Dendritic cell treated with granulocyte-macrophage colony-stimulating factor and Interleukin-4, amounts not matched to agents 40 ng/mL and 50 ng/mL, for 4 days (primary cell): ENCODE measurements at regions of chr5 and their contacts with region 1.

Region 1: DNA sequence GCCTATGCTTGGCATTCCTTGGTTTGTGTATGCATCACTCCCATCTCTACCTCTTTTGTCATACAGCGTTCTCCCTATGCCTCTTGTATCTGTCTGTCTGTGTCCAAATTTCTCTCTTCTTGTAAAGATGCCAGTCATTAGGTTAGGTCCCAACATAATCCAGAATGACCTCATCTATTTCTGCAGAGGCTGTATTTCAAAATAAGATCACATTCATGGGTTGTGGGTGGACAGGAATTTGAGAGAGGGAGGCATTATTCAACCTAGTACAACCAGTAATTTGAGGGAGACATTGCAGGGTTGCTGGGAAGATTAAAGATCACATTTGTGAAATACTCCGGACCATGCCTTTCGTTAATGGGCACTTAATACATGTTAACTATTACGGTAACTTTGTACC is 155.0 kb downstream of the MAN2A1 start:
- H3K4me3 Mint-ChIP-seq: no peak overlapping the region
- H3K27ac Mint-ChIP-seq: no peak overlapping the region
- H3K4me1 Mint-ChIP-seq: no peaks in the 10 kb centered on the region
- H3K27me3 Mint-ChIP-seq: no peaks in the 10 kb centered on the region

Region 2: DNA sequence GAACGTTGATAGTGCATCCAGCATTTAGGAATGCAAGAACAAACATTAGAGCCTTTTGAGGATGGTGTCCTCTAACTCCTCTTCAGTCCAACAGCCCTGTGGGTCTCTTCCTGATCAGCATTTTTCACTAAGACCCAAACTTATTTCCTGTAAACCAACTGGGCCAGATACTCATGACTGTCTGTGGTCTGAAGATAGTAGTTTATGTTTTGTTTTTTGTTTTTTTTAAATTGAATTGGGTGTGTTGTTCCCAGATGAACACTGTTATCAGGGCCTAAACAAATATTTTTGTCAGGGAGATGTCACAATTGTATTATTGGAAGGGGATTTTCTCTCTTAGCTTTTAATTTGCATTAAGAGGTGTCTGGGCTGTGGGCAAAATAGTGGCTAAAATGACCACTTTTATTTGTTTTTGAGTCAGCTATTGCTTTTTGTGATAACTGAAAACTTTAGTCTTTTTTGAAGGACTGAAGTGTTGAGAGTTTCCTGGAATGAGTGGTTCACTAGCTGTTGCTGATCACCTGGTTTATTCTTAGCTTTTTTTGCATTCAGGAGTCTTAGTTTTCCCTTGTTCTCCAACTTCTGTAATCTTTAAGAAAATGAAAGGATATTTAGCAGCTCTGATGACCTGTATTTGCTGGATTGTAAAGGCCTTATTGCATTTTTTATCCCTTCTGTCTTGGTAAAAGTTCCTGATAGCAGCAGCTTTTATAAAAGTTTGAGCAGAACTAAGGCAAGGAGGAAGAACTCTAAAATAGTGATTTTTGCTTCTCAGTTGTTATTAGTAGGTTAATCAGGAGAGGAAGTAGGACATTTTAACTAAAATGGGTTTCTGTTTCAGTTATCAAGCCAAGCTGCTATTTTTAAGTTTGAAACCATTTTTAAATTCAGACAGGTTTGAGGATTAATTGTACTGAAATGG is 149.4 kb before region 1 on chr5:
- intact Hi-C with region 1: loop called (anchors 5 kb)
- H3K4me3 Mint-ChIP-seq: peak overlapping the region; percentile 48
- H3K27ac Mint-ChIP-seq: peak overlapping the region; percentile 82
- H3K4me1 Mint-ChIP-seq: peaks cover 84% of the 10 kb centered on the region
- H3K27me3 Mint-ChIP-seq: no peaks in the 10 kb centered on the region